ENCODE measurements at regions of chr15 and their contacts with region 1.

Region 1: GRCh38 chr15:81106560-81106959 is 27.5 kb upstream of the CFAP161 start:
- DNase-seq: peak; percentile 30
- H3K4me3 Mint-ChIP-seq: no peak overlapping the region
- H3K27ac Mint-ChIP-seq: no peak overlapping the region
- H3K4me1 Mint-ChIP-seq: peaks cover 10% of the 10 kb centered on the region
- H3K27me3 Mint-ChIP-seq: peaks cover 63% of the 10 kb centered on the region

Region 2: GRCh38 chr15:80977627-80978036 is 128.9 kb before region 1 on chr15:
- intact Hi-C with region 1: loop called (anchors 5 kb)
- DNase-seq: no peak
- H3K4me3 Mint-ChIP-seq: no peak overlapping the region
- H3K27ac Mint-ChIP-seq: no peak overlapping the region
- H3K4me1 Mint-ChIP-seq: peaks cover 42% of the 10 kb centered on the region
- H3K27me3 Mint-ChIP-seq: no peaks in the 10 kb centered on the region

Region 3: DNA sequence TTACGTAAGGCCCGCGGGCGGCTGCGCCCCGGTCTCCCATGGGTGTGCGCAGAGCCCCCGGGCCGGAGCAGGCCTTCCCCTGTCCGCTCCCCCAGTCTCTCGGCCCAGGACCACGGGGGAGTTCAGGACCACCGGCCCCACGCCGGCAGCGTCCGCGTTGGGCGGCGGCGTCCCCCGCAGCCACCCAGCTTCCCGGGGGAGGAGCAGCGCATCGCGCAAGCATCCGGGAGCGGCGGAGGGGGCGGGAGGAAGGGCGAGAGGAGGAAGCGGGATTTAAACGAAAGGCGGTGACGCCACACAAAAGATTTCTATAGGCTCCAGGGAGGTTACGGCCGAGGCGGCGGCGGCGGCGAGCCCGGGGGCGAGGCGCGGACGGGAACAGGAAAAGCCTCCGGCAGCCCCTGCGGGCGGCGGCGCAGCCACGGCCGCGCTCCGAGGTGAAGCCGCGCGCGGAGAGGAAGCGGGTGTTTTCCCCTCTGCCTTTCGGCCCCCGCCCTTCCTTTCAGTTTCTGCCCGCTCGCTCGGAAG is 105.9 kb before region 1 on chr15 and contains the start of gene TLNRD1:
- intact Hi-C with region 1: loop called (anchors 1 kb)
- DNase-seq: peak; percentile 89
- H3K4me3 Mint-ChIP-seq: peak within 1 kb of the TSS; percentile 93
- H3K27ac Mint-ChIP-seq: peak within 1 kb of the TSS; percentile 95
- H3K4me1 Mint-ChIP-seq: peaks cover 45% of the 10 kb centered on the region
- H3K27me3 Mint-ChIP-seq: no peaks in the 10 kb centered on the region
- total RNA-seq, gene TLNRD1: 18.5 and 19.1 TPM in 2 replicates

Region 4: GRCh38 chr15:81155375-81156218 is 49.0 kb after region 1 on chr15:
- intact Hi-C with region 1: no loop called
- DNase-seq: no peak
- H3K4me3 Mint-ChIP-seq: no peak overlapping the region
- H3K27ac Mint-ChIP-seq: no peak overlapping the region
- H3K4me1 Mint-ChIP-seq: peaks cover 3% of the 10 kb centered on the region
- H3K27me3 Mint-ChIP-seq: peaks cover 7% of the 10 kb centered on the region

Region 5: GRCh38 chr15:81229586-81229985 is 123.0 kb after region 1 on chr15:
- intact Hi-C with region 1: no loop called
- DNase-seq: no peak
- H3K4me3 Mint-ChIP-seq: no peak overlapping the region
- H3K27ac Mint-ChIP-seq: no peak overlapping the region
- H3K4me1 Mint-ChIP-seq: no peaks in the 10 kb centered on the region
- H3K27me3 Mint-ChIP-seq: peaks cover 1% of the 10 kb centered on the region

Region 6: GRCh38 chr15:81400640-81401236 is 294.2 kb after region 1 on chr15:
- intact Hi-C with region 1: loop called (anchors 5 kb)
- DNase-seq: no peak
- H3K4me3 Mint-ChIP-seq: no peak overlapping the region
- H3K27ac Mint-ChIP-seq: no peak overlapping the region
- H3K4me1 Mint-ChIP-seq: peaks cover 2% of the 10 kb centered on the region
- H3K27me3 Mint-ChIP-seq: peaks cover 12% of the 10 kb centered on the region

Measured in activated T-helper 2 cell treated with anti-CD3 and anti-CD28 coated beads, Interferon-gamma antibody, Interleukin-2, Interleukin-4, amounts not matched to agents 10 μg/mL and 5 μg/mL and 100 μg/mL, durations not matched to agents 14 hours and 24 hours and 36 hours (primary cell).